Activated T-helper 1 cell treated with anti-CD3 and anti-CD28 coated beads, Interleukin-12 subunit alpha, Interleukin-12 subunit beta, Interleukin-2, Interleukin-4 antibody, amounts not matched to agents 30 ng/mL and 10 ng/mL and 1 ng/mL, durations not matched to agents 14 hours and 24 hours and 36 hours (primary cell): ENCODE measurements at regions of chr9 and their contacts with region 1.

Region 1: GRCh38 chr9:92293452-92294296 is at the start of gene IARS1:
- DNase-seq: peak; percentile 100
- H3K4me3 Mint-ChIP-seq: peak within 1 kb of the TSS; percentile 98
- H3K27ac Mint-ChIP-seq: peak within 1 kb of the TSS; percentile 98
- H3K4me1 Mint-ChIP-seq: peaks cover 64% of the 10 kb centered on the region
- H3K27me3 Mint-ChIP-seq: no peaks in the 10 kb centered on the region
- total RNA-seq, gene IARS1: 208 and 217 TPM in 2 replicates

Region 2: DNA sequence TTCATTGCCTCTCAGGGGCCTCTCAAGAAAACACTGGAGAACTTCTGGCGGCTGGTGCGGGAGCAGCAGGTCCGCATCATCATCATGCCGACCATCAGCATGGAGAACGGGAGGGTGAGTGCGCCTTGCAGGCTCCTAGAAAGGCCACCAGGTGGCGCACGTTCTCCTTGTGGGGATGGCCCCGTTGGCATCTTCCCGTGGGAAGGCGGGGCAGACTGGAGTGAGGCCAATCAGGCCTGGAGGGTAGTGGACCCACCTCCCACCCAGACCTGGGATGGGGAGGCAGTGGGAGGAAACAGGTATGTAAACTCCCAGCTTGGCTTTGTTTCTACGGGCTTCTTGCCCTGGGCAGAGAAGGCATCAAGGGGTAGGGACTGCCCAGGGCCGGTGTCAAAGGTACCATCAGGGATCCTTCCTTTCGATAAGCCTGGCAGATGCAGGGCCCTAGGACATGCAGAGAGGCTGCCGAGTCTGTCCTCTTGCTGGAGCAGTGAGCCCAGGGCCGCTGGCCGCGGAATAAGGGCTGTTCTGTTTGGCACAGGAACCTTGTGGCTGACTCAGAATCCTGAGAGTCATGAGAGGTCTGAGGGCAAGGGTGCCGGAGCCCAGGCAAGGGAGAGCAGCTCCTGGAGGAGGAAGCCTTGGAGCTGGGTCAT is 159.6 kb before region 1 on chr9:
- intact Hi-C with region 1: loop called (anchors 1 kb)
- DNase-seq: peak; percentile 65
- H3K4me3 Mint-ChIP-seq: no peak overlapping the region
- H3K27ac Mint-ChIP-seq: no peak overlapping the region
- H3K4me1 Mint-ChIP-seq: peaks cover 8% of the 10 kb centered on the region
- H3K27me3 Mint-ChIP-seq: peaks cover 30% of the 10 kb centered on the region

Region 3: DNA sequence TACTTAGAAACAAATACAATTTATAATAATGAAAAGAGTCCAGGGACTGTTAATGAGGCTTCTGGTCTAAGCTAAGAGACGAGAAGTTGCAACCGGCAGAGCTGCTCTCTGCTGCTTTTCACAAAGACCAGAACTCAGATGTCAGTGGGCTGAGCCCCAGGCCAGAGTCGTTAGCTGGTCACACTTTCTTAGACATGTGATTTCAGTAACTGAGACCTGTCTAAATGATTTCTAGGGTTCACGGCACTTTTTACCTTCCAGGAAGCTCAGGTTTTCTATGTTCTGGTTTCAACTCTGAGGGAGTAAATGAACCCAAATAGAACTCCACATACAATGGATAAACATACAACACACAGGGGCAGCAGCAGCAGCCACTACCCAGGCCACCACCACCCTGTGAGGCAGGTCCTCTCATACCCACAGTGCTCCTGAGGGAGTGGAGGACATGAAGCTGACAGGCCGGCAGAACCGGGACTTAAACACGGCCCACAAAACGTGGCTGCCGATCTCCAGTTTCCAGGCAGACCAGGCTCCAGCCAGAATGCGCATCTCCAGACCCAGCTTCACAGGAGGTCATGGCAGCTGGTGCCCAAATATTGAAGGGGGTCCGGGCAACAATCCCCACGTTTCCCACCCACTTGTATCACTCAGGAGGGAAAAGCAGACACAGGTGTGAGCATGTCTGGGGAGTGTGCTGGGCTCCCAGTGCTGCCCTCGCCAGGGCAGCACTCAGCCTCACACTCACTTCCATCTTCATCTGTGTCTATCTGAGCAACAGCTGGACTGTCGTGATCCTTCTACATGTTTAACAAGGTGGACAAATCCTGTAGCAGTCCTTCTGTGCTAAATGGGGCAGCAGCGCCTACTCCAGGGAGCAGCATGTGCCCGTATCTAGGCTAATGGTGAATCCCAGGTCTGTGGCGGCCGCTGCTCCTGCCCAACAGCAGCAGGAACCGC is 39.0 kb before region 1 on chr9:
- intact Hi-C with region 1: loop called (anchors 5 kb)
- DNase-seq: no peak
- H3K4me3 Mint-ChIP-seq: no peak overlapping the region
- H3K27ac Mint-ChIP-seq: no peak overlapping the region
- H3K4me1 Mint-ChIP-seq: no peaks in the 10 kb centered on the region
- H3K27me3 Mint-ChIP-seq: no peaks in the 10 kb centered on the region

Region 4: DNA sequence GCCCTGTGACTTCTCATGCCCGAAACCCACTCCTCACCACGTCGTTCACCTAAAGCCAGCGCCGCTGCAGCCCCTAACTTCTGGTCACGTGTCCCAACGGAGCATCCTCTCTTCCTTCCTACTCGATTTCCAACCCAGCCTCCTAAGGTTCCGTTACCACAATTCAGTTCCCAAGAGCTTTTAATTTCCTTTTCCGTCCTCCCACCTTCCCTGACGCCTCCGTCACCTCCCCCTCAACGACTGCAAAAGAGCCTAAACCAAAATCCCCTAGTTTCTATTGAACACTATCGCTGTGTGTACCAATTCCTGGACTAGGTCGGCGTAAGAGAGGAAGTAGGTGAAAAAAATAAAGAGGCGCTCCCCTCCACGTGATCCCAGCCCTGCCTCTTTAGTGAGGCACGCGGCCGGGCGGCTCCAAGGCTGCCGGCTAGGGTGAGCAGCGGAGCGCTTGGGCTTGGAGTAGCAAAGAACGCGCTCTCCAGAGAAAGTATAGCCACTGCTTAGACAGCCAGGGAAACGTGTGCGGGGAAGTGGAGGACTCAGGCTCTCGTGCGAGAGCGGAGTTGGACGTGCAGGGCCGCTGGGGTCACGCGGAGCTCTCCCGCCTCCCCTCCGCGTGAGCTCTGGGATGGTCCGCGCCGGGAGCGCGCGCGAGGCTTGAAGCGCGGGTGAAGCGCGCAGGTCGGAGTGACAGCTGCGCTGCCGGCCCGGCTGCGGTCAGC is 31.8 kb after region 1 on chr9 and contains the starts of genes CENPP and NOL8:
- intact Hi-C with region 1: loop called (anchors 1 kb)
- DNase-seq: peak; percentile 81
- H3K4me3 Mint-ChIP-seq: peak within 1 kb of the TSS; percentile 93
- H3K27ac Mint-ChIP-seq: peak within 1 kb of the TSS; percentile 96
- H3K4me1 Mint-ChIP-seq: peaks cover 32% of the 10 kb centered on the region
- H3K27me3 Mint-ChIP-seq: no peaks in the 10 kb centered on the region
- total RNA-seq, gene CENPP: 24.6 and 26.0 TPM in 2 replicates
- total RNA-seq, gene NOL8: 84.4 and 95.5 TPM in 2 replicates

Region 5: DNA sequence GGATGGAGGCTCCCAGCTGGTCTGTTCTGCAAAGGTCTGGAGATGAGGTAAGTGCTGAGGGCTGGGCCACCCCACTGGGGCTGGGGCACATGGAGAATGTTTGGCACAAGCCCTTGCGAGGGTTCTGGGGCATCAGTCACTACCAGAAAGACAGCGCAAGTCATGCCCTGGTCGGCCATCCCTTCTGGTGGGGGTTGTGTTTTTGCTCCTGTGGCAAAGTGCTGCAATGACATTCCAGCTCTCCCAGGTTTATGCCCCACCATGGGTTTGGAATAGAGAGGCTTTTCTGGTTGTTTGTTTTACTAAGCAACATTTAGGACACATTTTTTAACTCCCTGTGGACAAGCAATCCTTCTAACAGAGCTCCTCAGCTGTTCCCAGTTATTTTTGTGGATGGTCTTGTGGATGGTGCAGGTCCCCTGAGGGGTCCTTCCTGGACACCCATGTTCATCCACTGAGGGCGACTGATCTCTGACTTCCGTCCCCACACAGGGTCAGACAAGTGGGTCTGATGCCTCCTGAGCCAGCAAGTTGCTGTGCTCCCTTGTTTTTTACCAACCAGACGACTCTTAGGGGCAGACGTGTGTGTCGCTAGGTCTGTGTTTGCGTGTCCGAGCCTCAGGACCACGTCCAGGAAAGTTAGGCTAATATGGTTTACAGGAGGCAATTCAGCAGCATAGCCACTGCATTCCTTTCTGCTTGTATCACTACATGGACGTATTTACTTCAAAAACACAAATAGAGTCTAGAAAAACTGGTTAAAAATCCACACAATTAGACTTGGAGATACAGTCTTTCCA is 307.0 kb after region 1 on chr9:
- intact Hi-C with region 1: no loop called
- DNase-seq: no peak
- H3K4me3 Mint-ChIP-seq: no peak overlapping the region
- H3K27ac Mint-ChIP-seq: no peak overlapping the region
- H3K4me1 Mint-ChIP-seq: no peaks in the 10 kb centered on the region
- H3K27me3 Mint-ChIP-seq: no peaks in the 10 kb centered on the region